Left cardiac atrium (tissue), 4 donors: ENCODE measurements at regions of chr7 and their contacts with region 1.

Region 1: GRCh38 chr7:76179686-76180085 is 22.0 kb upstream of the SRRM3 start:
- DNase-seq: no peak
- ATAC-seq: no peak

Region 2: DNA sequence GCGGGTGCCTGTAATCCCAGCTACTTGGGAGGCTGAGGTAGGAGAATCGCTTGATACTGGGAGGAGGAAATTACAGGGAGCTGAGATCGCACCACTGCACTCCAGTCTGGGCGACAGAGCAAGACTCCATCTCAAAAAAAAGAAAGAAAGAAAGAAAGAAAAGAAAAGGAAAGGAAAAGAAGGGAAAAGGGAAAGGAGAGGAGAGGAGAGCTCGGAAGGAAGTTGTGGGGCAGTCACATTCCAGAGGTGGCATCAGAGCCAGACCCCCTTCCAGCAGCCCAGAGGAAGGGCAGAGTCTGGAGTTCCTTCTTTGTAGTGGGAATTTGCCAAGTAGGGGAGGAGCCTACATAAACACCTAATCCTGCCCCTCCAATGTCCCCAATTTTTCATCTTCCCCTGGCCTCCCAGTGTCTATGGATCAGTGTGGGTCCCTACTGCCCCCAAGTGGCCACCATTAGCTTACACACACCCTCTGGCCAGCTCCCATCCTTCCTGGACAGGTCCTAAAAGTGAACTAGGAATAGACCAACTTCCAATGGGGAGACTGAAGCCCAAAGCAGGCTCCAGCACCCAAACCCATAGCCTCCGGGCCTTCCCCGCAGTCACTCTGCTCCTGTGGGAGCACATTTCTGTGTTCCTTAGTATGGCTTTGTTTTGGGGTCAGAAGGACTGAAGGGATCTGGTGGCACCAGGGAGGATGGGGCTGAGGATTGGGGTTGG is 83.2 kb after region 1 on chr7:
- intact Hi-C with region 1: loop called in 1 of 2 experiments (anchors 5 kb)
- DNase-seq: peak; percentile 62
- ATAC-seq: peak in 1 of 2 donors; percentile 71

Region 3: DNA sequence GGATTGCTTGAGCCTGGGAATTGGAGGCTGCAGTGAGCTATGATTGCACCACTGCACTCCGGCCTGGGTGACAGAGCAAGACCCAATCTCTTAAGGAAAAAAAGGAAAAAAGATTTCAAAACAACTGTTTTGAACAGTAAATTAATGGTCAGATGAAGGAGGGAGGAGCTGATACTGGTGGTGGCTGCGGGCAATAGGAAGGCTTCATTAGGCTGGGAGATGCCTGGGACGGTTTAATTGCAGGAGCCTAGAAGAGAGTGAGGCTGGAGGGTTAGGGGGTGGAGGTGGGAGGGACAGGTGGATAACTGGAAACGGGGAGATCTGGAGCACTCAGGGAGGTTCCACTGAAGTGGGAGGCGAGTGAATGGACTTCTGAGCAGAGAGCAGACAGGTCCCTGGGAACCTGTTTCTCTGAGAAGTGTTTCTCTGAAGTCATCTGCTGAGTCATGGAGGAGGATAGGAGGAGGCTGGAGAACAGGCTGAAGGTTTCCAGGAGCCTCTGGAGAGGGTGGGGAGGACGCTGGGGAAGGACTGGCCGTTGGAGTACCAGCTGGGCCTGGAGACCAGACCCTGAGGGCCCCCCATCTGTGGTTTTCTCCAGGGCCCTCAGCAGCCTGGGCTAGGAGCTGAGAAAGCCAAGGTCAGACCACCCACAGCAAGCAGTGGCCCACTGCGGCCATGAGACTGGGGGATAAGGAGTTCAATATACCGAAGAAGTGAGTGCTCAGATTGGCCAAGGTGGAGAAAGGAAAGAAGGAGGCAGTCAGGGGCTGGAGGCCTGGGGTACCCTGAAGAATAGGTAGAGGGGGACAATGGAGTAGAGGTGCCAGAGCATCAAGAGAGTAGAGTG is 193.5 kb after region 1 on chr7:
- intact Hi-C with region 1: no loop called
- DNase-seq: no peak
- ATAC-seq: peak in 1 of 2 donors; percentile 80